Adrenal gland (tissue), 19 donors: ENCODE measurements at regions of chr7 and their contacts with region 1.

Region 1: GRCh38 chr7:151110941-151111645 is 24.8 kb downstream of the AGAP3 start:
- DNase-seq: peak; percentile 70 to 89 (median 80)
- H3K4me3 ChIP-seq: no peak overlapping the region
- H3K27ac ChIP-seq: no peak overlapping the region
- H3K4me1 ChIP-seq: peaks cover 0 to 7% of the 10 kb centered on the region in 2 donors
- H3K27me3 ChIP-seq: no peaks in the 10 kb centered on the region
- CTCF ChIP-seq: peak; percentile 79 to 92 (median 85)
- POLR2A ChIP-seq: no peak

Region 2: DNA sequence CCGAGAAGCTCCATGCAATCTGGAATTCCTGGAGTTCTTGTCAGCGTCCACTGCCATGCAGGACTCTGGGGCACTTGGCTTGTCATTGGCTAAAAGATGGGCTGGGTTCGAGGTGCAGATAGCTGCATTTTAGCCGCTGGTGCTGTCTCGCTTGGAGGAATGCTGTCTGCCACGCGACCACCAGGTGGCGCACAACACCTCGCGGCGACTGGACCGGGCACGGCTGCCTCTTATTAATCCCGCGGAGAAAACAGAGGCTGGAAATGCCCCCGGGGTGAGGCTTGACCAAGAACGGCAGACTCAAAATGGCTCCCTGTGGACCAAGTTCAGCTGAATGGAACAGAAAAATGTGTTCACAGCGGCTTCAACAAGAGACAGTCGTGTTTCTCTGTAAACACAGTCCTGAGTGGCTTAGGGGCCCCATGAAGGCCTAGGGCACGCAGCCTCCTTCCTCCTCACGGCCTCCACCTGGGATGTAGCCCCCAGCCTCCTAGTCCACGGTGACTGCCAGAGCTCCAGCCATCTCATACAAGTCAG is 212.6 kb before region 1 on chr7:
- intact Hi-C with region 1: loop called in 1 of 2 experiments (anchors 5 kb)
- DNase-seq: peak; percentile 73 to 94 (median 82)
- H3K4me3 ChIP-seq: no peak overlapping the region
- H3K27ac ChIP-seq: no peak overlapping the region
- H3K4me1 ChIP-seq: peaks cover 12 to 16% of the 10 kb centered on the region in 2 donors
- H3K27me3 ChIP-seq: no peaks in the 10 kb centered on the region
- CTCF ChIP-seq: peak; percentile 92 to 97 (median 94)
- POLR2A ChIP-seq: no peak

Region 3: GRCh38 chr7:151017953-151018420 is 93.1 kb before region 1 on chr7:
- intact Hi-C with region 1: loop called (anchors 5 kb)
- DNase-seq: peak; percentile 43 to 81 (median 68)
- H3K4me3 ChIP-seq: peak overlapping the region in 1 of 4 donors; percentile 26
- H3K27ac ChIP-seq: no peak overlapping the region
- H3K4me1 ChIP-seq: peaks cover 4 to 12% of the 10 kb centered on the region in 2 donors
- H3K27me3 ChIP-seq: peaks cover 46% of the 10 kb centered on the region
- CTCF ChIP-seq: peak; percentile 70 to 90 (median 80)
- POLR2A ChIP-seq: no peak

Region 4: DNA sequence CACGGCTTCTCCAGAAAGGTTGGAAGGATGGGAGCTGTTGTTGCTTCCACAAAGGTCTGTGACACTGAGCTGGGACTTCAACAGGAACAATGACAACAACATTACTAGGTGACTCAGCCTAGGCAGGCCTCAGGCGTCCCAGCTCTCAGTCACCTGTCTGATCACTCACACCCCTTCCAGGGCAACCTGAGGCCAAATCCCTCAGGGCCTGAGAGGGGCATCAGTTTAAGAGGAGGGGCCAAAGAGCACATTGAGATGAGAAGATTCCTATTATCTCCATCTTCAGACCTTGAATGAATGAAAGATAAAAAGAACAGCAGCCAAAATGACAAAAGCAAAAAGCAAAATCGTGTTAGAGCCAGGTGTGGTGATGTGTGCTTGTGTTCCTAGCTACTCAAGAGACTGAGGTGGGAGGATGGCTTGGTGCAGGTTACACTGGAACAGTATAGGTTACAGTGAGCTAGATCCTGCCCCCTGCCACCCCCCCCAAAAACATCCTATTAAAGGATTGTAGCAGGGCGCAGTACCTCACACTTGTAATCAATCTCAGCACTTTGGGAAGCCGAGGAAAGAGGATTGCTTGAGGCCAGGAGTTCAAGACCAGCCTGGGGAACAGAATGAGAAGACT is 86.5 kb before region 1 on chr7 and contains the start of gene ATG9B:
- intact Hi-C with region 1: loop called (anchors 5 kb)
- DNase-seq: no peak
- H3K4me3 ChIP-seq: no peak within 1 kb of the TSS
- H3K27ac ChIP-seq: no peak within 1 kb of the TSS
- H3K4me1 ChIP-seq: peaks cover 6 to 11% of the 10 kb centered on the region in 2 donors
- H3K27me3 ChIP-seq: peaks cover 13% of the 10 kb centered on the region
- CTCF ChIP-seq: no peak
- POLR2A ChIP-seq: no peak
- total RNA-seq, gene ATG9B: 0.23 to 0.74 (median 0.39) TPM in 7 of 9 donors, not detected in the others